ENCODE measurements at regions of chr11 and their contacts with region 1.

Region 1: GRCh38 chr11:118145285-118146227 is 7.1 kb downstream of the SCN4B start:
- DNase-seq: peak; percentile 81 to 93 (median 92)
- ATAC-seq: peak; percentile 89 to 91
- H3K4me3 ChIP-seq: peak overlapping the region; percentile 44
- H3K27ac ChIP-seq: no peak overlapping the region
- H3K4me1 ChIP-seq: peaks cover 2% of the 10 kb centered on the region
- H3K27me3 ChIP-seq: no peaks in the 10 kb centered on the region

Region 2: DNA sequence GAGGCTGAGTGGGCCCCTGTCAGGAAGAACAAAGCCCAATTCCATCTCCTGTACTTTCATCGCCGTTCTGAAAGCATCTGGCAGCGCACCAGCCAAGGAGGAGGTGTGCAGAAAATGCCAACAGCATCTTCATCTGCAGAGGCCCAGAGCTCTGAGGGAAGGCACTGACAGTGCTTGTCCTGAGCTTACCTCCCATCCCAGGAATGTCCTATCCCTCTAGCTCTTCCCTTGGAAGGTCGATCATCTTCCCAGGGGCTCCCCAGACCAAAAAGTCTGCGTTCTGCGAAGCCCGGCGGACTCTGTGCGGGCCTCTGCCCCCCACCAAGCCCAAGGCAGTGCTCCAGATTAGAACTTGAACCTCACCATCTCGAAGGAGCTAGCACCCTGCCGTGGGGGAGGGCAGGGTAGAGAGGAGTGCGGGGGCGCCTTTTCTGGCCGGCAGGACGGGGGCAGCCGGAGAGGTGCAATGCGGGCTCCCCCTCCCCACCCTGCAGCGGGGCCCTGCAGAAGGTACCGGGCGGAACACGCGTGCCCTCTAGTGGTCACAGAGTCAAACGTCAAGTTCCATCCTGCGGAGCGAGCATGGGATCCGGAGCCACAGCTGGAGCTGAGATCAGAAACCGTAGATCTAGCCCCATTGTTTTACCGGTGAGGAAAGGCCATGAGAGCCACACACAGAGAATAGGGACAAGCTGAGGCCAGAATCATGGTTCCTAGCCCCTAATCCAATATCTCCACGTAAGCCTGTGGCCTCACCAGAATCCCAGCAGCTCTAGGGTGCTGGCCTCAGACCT is 25.9 kb after region 1 on chr11:
- intact Hi-C with region 1: loop called in 1 of 4 experiments (anchors 2 kb)
- DNase-seq: peak; percentile 69 to 87 (median 85)
- ATAC-seq: peak; percentile 62 to 73
- H3K4me3 ChIP-seq: no peak overlapping the region
- H3K27ac ChIP-seq: no peak overlapping the region
- H3K4me1 ChIP-seq: no peaks in the 10 kb centered on the region
- H3K27me3 ChIP-seq: no peaks in the 10 kb centered on the region

Region 3: DNA sequence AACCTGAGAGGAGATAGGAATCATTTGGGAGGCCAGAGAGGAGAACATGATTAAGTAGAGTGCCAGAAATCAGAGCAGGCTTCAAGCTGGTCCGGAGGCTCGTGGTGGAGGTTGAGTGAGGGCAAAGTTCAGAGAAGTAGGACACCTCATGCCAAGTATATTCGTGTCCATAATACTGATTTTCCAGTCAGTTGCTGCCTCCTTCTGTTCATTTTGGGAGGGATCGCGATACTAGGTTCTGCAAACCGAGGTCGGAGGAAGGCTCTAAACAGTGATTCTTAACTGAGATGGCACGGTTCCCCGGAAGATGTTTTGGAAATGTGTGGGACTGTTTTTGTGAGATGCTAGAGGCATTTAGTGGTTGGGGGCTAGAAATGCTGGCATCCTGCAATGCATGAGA is 145.4 kb after region 1 on chr11:
- intact Hi-C with region 1: loop called in 3 of 4 experiments (anchors 5 to 10 kb)
- DNase-seq: no peak
- ATAC-seq: peak; percentile 81 to 88
- H3K4me3 ChIP-seq: no peak overlapping the region
- H3K27ac ChIP-seq: no peak overlapping the region
- H3K4me1 ChIP-seq: no peaks in the 10 kb centered on the region
- H3K27me3 ChIP-seq: no peaks in the 10 kb centered on the region

Region 4: GRCh38 chr11:118359295-118359958 is 213.9 kb after region 1 on chr11 and contains the start of gene UBE4A:
- intact Hi-C with region 1: loop called in 2 of 4 experiments (anchors 10 kb)
- DNase-seq: peak; percentile 97 to 99 (median 98)
- ATAC-seq: peak; percentile 95 to 96
- H3K4me3 ChIP-seq: peak within 1 kb of the TSS; percentile 93
- H3K27ac ChIP-seq: peak within 1 kb of the TSS; percentile 51
- H3K4me1 ChIP-seq: peaks cover 4% of the 10 kb centered on the region
- H3K27me3 ChIP-seq: no peaks in the 10 kb centered on the region
- total RNA-seq, gene UBE4A: 40.7 to 45.8 (median 43.6) TPM

Region 5: GRCh38 chr11:118488480-118489109 is 343.0 kb after region 1 on chr11:
- intact Hi-C with region 1: loop called in 2 of 4 experiments (anchors 10 kb)
- DNase-seq: peak; percentile 58 to 77 (median 65)
- ATAC-seq: peak; percentile 59 to 64
- H3K4me3 ChIP-seq: no peak overlapping the region
- H3K27ac ChIP-seq: no peak overlapping the region
- H3K4me1 ChIP-seq: no peaks in the 10 kb centered on the region
- H3K27me3 ChIP-seq: no peaks in the 10 kb centered on the region